HCT116 (cell line): ENCODE measurements at regions of chr2 and their contacts with region 1.

Region 1: GRCh38 chr2:209322041-209322440 is 101.8 kb upstream of the MAP2 start:
- DNase-seq: no peak
- ATAC-seq: no peak
- H3K4me3 ChIP-seq: no peak overlapping the region
- H3K27ac ChIP-seq: no peak overlapping the region
- H3K4me1 ChIP-seq: no peaks in the 10 kb centered on the region; a peak in 1 of 4 replicates
- H3K27me3 ChIP-seq: no peaks in the 10 kb centered on the region
- CTCF ChIP-seq: peak in 2 of 3 experiments; percentile 22 to 37; a peak in 3 of 6 replicates
- POLR2A ChIP-seq: no peak
- RAD21 ChIP-seq: peak; percentile 58

Region 2: DNA sequence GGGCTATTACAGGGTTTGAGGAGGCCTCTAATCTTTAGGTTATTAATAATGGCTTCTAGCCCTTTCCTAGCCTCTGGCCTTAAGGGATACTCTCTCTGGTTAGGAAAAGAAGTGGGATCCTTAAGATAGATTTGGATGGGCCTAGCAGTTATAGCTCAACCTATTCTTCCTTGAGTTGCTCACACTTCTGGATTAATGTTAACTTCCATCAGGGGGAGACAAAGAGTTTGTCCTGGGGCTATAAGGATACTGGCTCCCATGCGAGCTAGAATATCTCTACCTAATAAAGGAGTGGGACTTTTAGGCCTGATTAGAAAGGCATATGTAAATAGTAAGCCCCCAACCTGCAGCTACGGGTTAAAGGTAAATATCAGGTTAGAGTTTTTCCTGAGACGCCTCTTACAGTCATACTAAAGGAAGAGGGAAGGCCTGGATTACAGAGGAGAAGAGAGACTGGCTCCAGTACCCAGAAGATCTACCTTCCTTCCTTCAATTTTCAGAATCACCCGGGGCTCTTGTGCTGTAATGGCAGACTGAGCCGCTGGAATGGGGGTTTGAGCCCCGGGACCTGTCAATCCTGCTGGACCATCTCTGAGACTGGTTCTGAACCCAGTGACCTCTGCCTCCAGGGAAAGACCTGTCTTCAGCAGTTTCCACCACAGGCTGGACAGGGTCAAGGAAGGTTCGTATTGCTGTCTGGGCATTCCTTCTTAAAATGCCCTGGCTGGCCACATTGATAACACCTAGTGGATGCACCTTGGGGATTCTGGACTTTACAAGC is 929.6 kb before region 1 on chr2:
- CTCF ChIA-PET with region 1: interaction called, 12 read pairs
- POLR2A ChIA-PET with region 1: no interaction called
- RAD21 ChIA-PET with region 1: no interaction called
- intact Hi-C with region 1: loop called (anchors 2 kb)
- DNase-seq: no peak
- ATAC-seq: peak; percentile 59
- H3K4me3 ChIP-seq: no peak overlapping the region
- H3K27ac ChIP-seq: no peak overlapping the region
- H3K4me1 ChIP-seq: no peaks in the 10 kb centered on the region
- H3K27me3 ChIP-seq: no peaks in the 10 kb centered on the region
- CTCF ChIP-seq: peak in 2 of 3 experiments; percentile 39; a peak in 3 of 6 replicates
- POLR2A ChIP-seq: no peak
- RAD21 ChIP-seq: peak; percentile 19; the same call in 1 of the 2 replicates

Region 3: DNA sequence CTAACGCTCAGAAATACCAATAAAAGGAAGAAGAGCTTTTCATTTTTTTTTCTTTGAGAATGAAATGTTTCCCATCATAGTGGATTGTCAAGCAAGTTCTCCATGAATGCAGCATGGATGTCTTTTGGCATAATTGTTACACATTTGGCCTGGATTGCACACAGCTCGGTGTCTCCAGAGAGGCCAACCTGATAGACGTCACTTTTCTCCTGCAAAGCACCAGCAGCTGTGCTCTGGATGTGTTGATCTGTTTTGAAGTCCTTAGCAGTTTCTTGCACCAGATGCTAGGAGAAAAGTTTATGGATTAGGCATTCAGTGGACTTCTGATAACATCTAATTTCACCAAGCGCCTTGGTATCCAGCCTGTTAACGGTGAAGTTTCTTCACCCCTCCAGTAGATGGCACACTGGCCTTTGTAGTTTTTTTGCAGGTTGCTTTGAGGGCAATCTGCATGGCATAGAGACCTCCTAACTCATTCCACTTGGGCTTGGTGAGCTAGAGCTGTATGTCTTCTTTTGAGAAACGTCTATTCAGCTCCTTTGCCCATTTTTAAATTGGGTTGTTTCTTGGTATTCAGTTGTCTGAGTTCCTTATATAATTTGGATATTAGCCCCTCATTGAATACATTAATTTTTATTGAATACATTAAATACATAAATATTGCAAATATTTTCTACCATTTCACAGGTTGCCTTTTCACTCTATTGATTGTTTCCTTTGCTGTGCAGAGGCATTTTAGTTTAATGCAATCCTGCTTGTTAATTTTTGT is 855.7 kb before region 1 on chr2:
- CTCF ChIA-PET with region 1: interaction called, 6 read pairs
- POLR2A ChIA-PET with region 1: no interaction called
- RAD21 ChIA-PET with region 1: no interaction called
- intact Hi-C with region 1: loop called (anchors 2 kb)
- DNase-seq: peak; percentile 44
- ATAC-seq: peak; percentile 90
- H3K4me3 ChIP-seq: no peak overlapping the region
- H3K27ac ChIP-seq: no peak overlapping the region
- H3K4me1 ChIP-seq: no peaks in the 10 kb centered on the region
- H3K27me3 ChIP-seq: no peaks in the 10 kb centered on the region
- CTCF ChIP-seq: peak; percentile 58 to 79 (median 74)
- POLR2A ChIP-seq: no peak
- RAD21 ChIP-seq: peak; percentile 83

Region 4: DNA sequence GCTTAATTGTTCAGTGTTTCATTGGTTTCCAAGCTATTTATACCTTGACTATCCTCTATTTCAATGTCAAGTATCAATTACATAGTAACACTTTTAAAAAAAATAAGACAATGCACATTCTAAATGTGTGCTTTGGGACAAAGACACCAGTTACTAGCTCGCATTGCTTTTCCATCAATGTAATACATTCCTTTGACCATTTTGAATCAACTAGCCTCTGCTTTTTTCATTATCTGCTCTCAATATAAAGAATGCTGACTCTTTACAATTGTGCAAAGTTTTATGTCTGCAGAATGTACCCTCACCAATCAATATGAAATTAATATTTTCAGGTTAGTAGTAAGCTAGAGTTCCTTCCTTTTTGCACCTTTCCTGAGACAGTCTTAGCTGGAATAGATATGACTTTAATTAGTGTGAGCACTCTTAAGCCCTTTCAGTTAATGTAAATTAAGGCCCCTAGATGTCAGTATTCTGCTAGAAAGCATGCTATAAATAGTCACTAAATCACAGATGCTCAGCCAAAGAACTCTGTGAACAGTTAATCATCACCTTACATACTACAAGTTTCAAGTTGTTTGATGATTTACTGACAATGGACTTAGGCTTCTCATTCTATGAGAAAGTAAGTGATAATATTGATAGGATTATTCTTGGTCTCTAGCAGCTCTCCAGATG is 501.9 kb before region 1 on chr2:
- CTCF ChIA-PET with region 1: no interaction called
- POLR2A ChIA-PET with region 1: no interaction called
- RAD21 ChIA-PET with region 1: no interaction called
- intact Hi-C with region 1: loop called (anchors 5 kb)
- DNase-seq: peak; percentile 4
- ATAC-seq: peak; percentile 69
- H3K4me3 ChIP-seq: no peak overlapping the region
- H3K27ac ChIP-seq: no peak overlapping the region
- H3K4me1 ChIP-seq: no peaks in the 10 kb centered on the region
- H3K27me3 ChIP-seq: 0 out of 2 replicates have a peak, but pooled peaks cover 3% of the 10 kb centered on the region
- CTCF ChIP-seq: peak; percentile 32 to 50 (median 37); a peak in 3 of 6 replicates
- POLR2A ChIP-seq: no peak
- RAD21 ChIP-seq: peak; percentile 58

Region 5: GRCh38 chr2:209380293-209380692 is 58.3 kb after region 1 on chr2:
- CTCF ChIA-PET with region 1: no interaction called
- POLR2A ChIA-PET with region 1: no interaction called
- RAD21 ChIA-PET with region 1: no interaction called
- intact Hi-C with region 1: no loop called
- DNase-seq: no peak
- ATAC-seq: no peak
- H3K4me3 ChIP-seq: no peak overlapping the region
- H3K27ac ChIP-seq: no peak overlapping the region
- H3K4me1 ChIP-seq: peaks cover 9 to 15% of the 10 kb centered on the region in 2 experiments
- H3K27me3 ChIP-seq: no peaks in the 10 kb centered on the region
- CTCF ChIP-seq: no peak
- POLR2A ChIP-seq: no peak
- RAD21 ChIP-seq: no peak